IMR-90 (cell line): ENCODE measurements at regions of chr11 and their contacts with region 1.

Region 1: GRCh38 chr11:65497141-65498041 is 1.5 kb upstream of the MALAT1 start:
- DNase-seq: peak; percentile 97
- ATAC-seq: peak; percentile 70
- H3K4me3 ChIP-seq: peak overlapping the region; percentile 72
- H3K27ac ChIP-seq: peak overlapping the region; percentile 99
- H3K4me1 ChIP-seq: peaks cover 13% of the 10 kb centered on the region
- H3K27me3 ChIP-seq: no peaks in the 10 kb centered on the region
- CTCF ChIP-seq: no peak
- POLR2A ChIP-seq: no peak
- RAD21 ChIP-seq: no peak

Region 2: GRCh38 chr11:65355013-65355775 is 142.2 kb before region 1 on chr11:
- CTCF ChIA-PET with region 1: no interaction called
- POLR2A ChIA-PET with region 1: interaction called, 10 read pairs
- dilution Hi-C with region 1: no loop called
- in situ Hi-C with region 1: no loop called
- intact Hi-C with region 1: no loop called
- DNase-seq: no peak
- ATAC-seq: no peak
- H3K4me3 ChIP-seq: peak overlapping the region; percentile 72
- H3K27ac ChIP-seq: no peak overlapping the region
- H3K4me1 ChIP-seq: peaks cover 8% of the 10 kb centered on the region
- H3K27me3 ChIP-seq: peaks cover 22% of the 10 kb centered on the region
- CTCF ChIP-seq: no peak
- POLR2A ChIP-seq: no peak
- RAD21 ChIP-seq: no peak

Region 3: GRCh38 chr11:65398362-65398910 is 99.0 kb before region 1 on chr11:
- CTCF ChIA-PET with region 1: no interaction called
- POLR2A ChIA-PET with region 1: interaction called, 16 read pairs
- dilution Hi-C with region 1: no loop called
- in situ Hi-C with region 1: no loop called
- intact Hi-C with region 1: no loop called
- DNase-seq: no peak
- ATAC-seq: no peak
- H3K4me3 ChIP-seq: no peak overlapping the region
- H3K27ac ChIP-seq: no peak overlapping the region
- H3K4me1 ChIP-seq: no peaks in the 10 kb centered on the region
- H3K27me3 ChIP-seq: no peaks in the 10 kb centered on the region
- CTCF ChIP-seq: no peak
- POLR2A ChIP-seq: no peak
- RAD21 ChIP-seq: no peak

Region 4: GRCh38 chr11:65440831-65441499 is 56.4 kb before region 1 on chr11:
- CTCF ChIA-PET with region 1: interaction called, 3 read pairs
- POLR2A ChIA-PET with region 1: interaction called, 27 read pairs
- dilution Hi-C with region 1: no loop called
- in situ Hi-C with region 1: no loop called
- intact Hi-C with region 1: no loop called
- DNase-seq: peak; percentile 43
- ATAC-seq: no peak
- H3K4me3 ChIP-seq: no peak overlapping the region
- H3K27ac ChIP-seq: no peak overlapping the region
- H3K4me1 ChIP-seq: peaks cover 4% of the 10 kb centered on the region; the same call in 1 of the 2 replicates
- H3K27me3 ChIP-seq: no peaks in the 10 kb centered on the region
- CTCF ChIP-seq: no peak
- POLR2A ChIP-seq: peak; percentile 78
- RAD21 ChIP-seq: no peak

Region 5: DNA sequence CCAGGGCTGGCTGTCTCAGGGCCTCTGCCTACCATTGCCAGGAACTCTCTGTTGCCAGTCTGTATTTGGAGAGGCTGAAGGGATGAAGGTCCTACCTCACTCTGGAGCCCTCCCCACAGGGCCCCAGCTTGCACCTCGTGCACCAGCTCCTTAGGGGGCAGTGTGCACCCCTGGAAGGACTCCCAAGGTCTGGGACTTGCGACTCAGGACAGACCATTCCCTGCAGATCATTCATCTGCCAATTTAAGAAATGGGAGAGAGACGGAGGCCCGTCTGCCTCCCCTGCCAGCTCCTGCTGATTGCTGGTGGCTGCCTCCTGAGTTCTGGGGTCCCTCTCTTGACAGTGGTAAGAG is 26.0 kb before region 1 on chr11:
- CTCF ChIA-PET with region 1: interaction called, 8 read pairs
- POLR2A ChIA-PET with region 1: interaction called, 494 read pairs
- dilution Hi-C with region 1: no loop called
- in situ Hi-C with region 1: no loop called
- intact Hi-C with region 1: no loop called
- DNase-seq: peak; percentile 79
- ATAC-seq: peak; percentile 68
- H3K4me3 ChIP-seq: peak overlapping the region; percentile 13; the same call in 1 of the 2 replicates
- H3K27ac ChIP-seq: peak overlapping the region; percentile 69
- H3K4me1 ChIP-seq: peaks cover 10% of the 10 kb centered on the region
- H3K27me3 ChIP-seq: no peaks in the 10 kb centered on the region
- CTCF ChIP-seq: peak; percentile 65
- POLR2A ChIP-seq: peak; percentile 60; the same call in 1 of the 2 replicates
- RAD21 ChIP-seq: peak; percentile 68